ENCODE measurements at regions of chr6 and their contacts with region 1.

Region 1: GRCh38 chr6:157274471-157275226 is 48.7 kb downstream of the TMEM242 start:
- DNase-seq: peak; percentile 59
- H3K4me3 ChIP-seq: peak overlapping the region; percentile 55 to 81 (median 66)
- H3K27ac ChIP-seq: no peak overlapping the region
- H3K4me1 ChIP-seq: peaks cover 7% of the 10 kb centered on the region
- H3K27me3 ChIP-seq: no peaks in the 10 kb centered on the region
- CTCF ChIP-seq: peak; percentile 55 to 60

Region 2: DNA sequence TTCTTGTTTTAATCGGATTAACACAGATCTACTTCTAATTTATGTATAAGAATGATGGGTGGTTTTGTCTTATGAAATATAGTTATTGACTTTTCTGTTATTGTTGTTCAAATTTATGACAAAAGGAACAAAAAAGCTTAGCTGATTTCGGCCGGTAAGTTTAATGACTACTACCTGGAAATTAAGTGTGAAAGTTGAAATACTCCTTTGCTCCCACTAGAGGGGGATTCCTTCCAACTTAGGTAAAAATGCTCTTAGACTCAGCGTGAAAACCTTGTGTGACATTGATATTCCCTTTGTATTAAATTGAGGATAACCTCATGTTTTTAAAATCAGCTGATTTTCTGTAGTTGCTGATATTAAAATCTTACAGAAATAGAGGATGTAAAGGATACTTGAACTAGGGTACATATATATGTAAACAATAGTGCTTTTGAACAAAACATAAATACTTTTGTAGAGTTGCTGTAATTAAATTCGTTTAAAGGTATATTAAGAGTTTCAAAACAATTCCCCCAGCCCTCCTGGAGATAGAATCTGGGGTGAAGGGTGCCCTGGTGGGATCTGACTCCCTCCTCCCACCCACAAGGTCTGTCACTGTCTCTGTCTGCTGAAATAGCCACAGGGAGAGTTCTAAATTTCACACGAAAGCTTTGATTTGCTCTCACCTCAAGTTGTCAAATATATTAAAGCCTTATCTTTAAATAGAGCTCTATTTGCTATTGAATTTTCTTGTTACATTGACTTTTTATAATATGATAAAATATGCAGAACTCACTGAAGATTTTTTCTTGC is 240.0 kb before region 1 on chr6:
- CTCF ChIA-PET with region 1: interaction called, 7 read pairs
- dilution Hi-C with region 1: no loop called
- in situ Hi-C with region 1: no loop called
- intact Hi-C with region 1: loop called (anchors 1 kb)
- DNase-seq: peak; percentile 58
- H3K4me3 ChIP-seq: peak overlapping the region in 2 of 3 experiments; percentile 25 to 71
- H3K27ac ChIP-seq: peak overlapping the region; percentile 93
- H3K4me1 ChIP-seq: peaks cover 47% of the 10 kb centered on the region
- H3K27me3 ChIP-seq: no peaks in the 10 kb centered on the region
- CTCF ChIP-seq: peak; percentile 59 to 76

Region 3: GRCh38 chr6:157143171-157143889 is 131.3 kb before region 1 on chr6:
- CTCF ChIA-PET with region 1: no interaction called
- dilution Hi-C with region 1: no loop called
- in situ Hi-C with region 1: no loop called
- intact Hi-C with region 1: no loop called
- DNase-seq: no peak
- H3K4me3 ChIP-seq: no peak overlapping the region
- H3K27ac ChIP-seq: no peak overlapping the region
- H3K4me1 ChIP-seq: peaks cover 18% of the 10 kb centered on the region
- H3K27me3 ChIP-seq: no peaks in the 10 kb centered on the region
- CTCF ChIP-seq: no peak

Region 4: GRCh38 chr6:157198419-157199279 is 76.0 kb before region 1 on chr6:
- CTCF ChIA-PET with region 1: no interaction called
- dilution Hi-C with region 1: no loop called
- in situ Hi-C with region 1: no loop called
- intact Hi-C with region 1: loop called (anchors 1 kb)
- DNase-seq: peak; percentile 97
- H3K4me3 ChIP-seq: peak overlapping the region; percentile 1 to 16 (median 16)
- H3K27ac ChIP-seq: peak overlapping the region; percentile 11
- H3K4me1 ChIP-seq: peaks cover 9% of the 10 kb centered on the region
- H3K27me3 ChIP-seq: no peaks in the 10 kb centered on the region
- CTCF ChIP-seq: no peak

Region 5: DNA sequence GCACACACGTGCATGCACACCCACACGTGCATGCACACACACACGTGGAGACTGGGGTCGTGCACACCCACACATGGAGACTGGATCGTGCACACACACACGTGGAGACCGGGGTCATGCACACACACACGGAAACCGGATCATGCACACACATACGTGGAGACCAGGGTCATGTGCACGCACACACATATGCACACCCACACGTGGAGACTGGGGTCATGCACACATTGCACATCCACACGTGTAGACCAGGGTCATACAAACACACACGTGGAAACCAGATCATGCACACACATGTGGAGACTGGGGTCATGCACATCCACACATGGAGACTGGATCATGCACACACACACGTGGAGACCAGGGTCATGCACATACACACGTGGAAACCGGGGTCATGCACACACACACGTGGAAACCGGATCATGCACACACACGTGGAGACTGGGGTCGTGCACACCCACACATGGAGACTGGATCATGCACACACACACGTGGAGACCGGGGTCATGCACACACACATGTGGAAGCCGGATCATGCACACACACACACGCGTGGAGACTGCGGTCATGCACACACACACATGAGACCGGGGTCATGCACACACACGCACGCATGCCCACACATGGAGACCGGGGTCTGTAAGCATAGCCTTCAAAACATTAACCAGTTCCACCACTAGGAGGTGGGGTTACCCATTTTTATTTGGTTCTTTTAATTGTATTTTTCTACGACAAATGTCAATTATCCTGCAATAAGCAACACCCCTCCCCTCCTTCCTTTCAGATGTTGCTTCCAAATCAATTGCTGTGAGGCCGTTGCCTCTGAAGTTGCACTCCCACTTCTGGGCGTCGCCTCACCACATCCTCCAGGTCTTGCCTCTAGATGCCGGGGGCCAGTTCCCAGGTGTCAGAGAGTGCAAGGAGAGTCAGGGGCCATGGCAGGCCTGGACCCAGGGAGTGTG is 47.2 kb before region 1 on chr6:
- CTCF ChIA-PET with region 1: interaction called, 4 read pairs
- dilution Hi-C with region 1: no loop called
- in situ Hi-C with region 1: no loop called
- intact Hi-C with region 1: loop called (anchors 2 kb)
- DNase-seq: no peak
- H3K4me3 ChIP-seq: no peak overlapping the region
- H3K27ac ChIP-seq: no peak overlapping the region
- H3K4me1 ChIP-seq: peaks cover 4% of the 10 kb centered on the region
- H3K27me3 ChIP-seq: no peaks in the 10 kb centered on the region
- CTCF ChIP-seq: peak; percentile 10 to 38

Region 6: DNA sequence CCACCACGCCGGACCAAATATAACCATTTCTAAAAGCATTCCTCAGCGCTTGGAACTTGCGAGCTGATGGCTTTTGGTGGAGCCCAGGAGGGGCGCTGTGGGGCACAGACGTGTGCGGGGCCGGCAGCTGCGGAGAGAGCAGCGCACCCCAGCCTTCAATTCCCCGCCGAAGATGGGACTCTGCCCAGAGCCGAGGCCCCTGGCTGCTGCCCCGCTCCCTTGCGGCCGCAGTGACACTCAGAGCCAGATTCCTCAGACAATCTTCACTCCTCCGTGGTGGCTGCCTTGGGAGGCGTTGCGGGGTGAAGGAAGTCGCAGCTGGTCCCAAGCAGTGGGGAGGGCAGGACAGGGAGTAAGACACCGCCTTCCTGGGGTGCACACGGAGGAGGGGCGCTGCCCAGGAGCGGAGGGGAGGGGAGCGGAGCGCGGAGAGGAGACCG is 39.0 kb before region 1 on chr6:
- CTCF ChIA-PET with region 1: no interaction called
- dilution Hi-C with region 1: no loop called
- in situ Hi-C with region 1: no loop called
- intact Hi-C with region 1: loop called (anchors 2 kb)
- DNase-seq: peak; percentile 16
- H3K4me3 ChIP-seq: peak overlapping the region; percentile 8 to 46 (median 26)
- H3K27ac ChIP-seq: no peak overlapping the region
- H3K4me1 ChIP-seq: peaks cover 7% of the 10 kb centered on the region
- H3K27me3 ChIP-seq: peaks cover 15% of the 10 kb centered on the region
- CTCF ChIP-seq: peak; percentile 49 to 69

Measured in mammary epithelial cell (primary cell).